Body of pancreas (tissue), 4 donors: ENCODE measurements at regions of chr6 and their contacts with region 1.

Region 1: DNA sequence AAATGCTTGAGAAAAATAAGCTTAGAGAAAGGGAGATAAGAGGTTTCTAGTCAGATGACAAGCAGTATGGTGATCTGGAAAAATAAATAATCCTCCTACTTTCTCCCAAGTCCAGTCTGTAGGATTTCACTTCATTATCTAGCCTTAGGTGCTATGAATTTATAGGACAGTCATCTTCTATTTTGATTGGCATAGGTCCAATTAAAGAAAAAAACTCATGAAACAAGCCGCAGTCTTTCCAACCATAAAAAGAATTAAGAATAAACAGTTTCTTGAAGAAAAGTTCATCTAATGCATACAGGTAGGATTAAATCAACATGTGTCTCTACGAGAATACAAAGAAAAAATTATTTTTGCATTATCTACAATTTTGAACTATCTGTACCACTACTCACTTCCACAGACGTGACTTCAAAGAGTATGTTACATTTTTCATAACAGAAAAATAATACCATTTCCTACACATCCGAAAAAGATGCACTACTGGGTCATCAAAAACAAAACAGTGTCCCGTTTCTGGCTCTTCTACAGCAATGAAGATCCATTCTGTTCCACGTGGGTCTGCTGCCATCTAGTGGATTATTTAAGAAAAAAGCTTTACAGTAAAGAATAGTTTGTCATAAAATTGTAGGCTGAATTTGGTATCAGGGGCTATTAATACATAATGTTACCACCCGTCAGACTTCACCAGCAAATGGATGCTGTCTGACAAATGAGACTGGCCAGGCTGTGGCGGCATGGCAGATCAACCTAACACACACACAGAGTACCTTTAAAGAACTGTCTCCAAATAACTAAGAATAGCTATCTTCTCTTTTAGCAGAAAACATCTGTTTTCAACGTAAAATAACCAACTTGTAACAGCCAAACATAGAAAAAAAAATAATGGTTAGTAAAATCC is 28.9 kb downstream of the STX7 start:
- DNase-seq: peak; percentile 22 to 44 (median 36)
- ATAC-seq: peak; percentile 65
- H3K4me3 ChIP-seq: no peak overlapping the region
- H3K27ac ChIP-seq: no peak overlapping the region
- H3K4me1 ChIP-seq: no peaks in the 10 kb centered on the region
- H3K27me3 ChIP-seq: no peaks in the 10 kb centered on the region
- CTCF ChIP-seq: peak; percentile 26 to 82 (median 68)
- POLR2A ChIP-seq: no peak

Region 2: GRCh38 chr6:132279592-132280139 is 204.4 kb before region 1 on chr6:
- intact Hi-C with region 1: loop called (anchors 10 kb)
- DNase-seq: peak; percentile 69 to 81 (median 75)
- ATAC-seq: peak; percentile 90
- H3K4me3 ChIP-seq: peak overlapping the region in 1 of 2 donors; percentile 37
- H3K27ac ChIP-seq: no peak overlapping the region
- H3K4me1 ChIP-seq: no peaks in the 10 kb centered on the region
- H3K27me3 ChIP-seq: peaks cover 0 to 4% of the 10 kb centered on the region in 2 donors
- CTCF ChIP-seq: peak; percentile 78 to 99 (median 83)
- POLR2A ChIP-seq: no peak

Region 3: DNA sequence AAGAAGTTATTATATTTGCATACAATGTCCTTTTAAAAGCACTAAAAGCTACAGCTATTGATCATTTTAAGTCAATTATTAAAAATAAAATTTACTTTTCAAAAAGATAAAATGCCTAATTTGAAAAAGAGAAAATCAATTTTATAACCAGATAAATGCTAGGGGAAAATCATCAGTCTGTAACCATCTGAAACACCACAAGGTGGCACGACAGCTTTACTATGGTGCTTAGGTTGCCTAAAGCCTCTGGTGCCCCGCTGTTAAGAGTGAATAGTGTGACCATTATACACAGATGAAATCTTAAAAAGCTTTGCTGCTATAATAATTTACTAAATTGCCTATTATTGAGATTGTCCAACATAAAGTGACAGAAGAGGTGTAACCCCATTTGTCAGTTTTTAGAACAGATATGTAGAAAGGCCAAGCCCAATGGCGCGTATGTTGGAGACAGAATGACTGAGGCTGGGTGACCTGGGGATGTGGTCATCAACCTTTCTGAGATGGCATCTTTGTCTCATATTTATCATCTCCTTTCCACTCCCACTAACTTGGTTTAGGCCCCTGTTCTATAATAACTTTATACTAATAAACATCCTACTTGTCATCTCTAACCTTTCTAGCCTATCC is 183.6 kb before region 1 on chr6:
- intact Hi-C with region 1: loop called (anchors 10 kb)
- DNase-seq: peak; percentile 26 to 55 (median 40)
- ATAC-seq: peak; percentile 68
- H3K4me3 ChIP-seq: no peak overlapping the region
- H3K27ac ChIP-seq: no peak overlapping the region
- H3K4me1 ChIP-seq: no peaks in the 10 kb centered on the region
- H3K27me3 ChIP-seq: no peaks in the 10 kb centered on the region
- CTCF ChIP-seq: peak in 6 of 7 experiments; percentile 48 to 64 (median 60)
- POLR2A ChIP-seq: no peak

Region 4: GRCh38 chr6:132623106-132623845 is 139.2 kb after region 1 on chr6:
- intact Hi-C with region 1: no loop called
- DNase-seq: no peak
- ATAC-seq: no peak
- H3K4me3 ChIP-seq: no peak overlapping the region
- H3K27ac ChIP-seq: no peak overlapping the region
- H3K4me1 ChIP-seq: no peaks in the 10 kb centered on the region
- H3K27me3 ChIP-seq: no peaks in the 10 kb centered on the region
- CTCF ChIP-seq: no peak
- POLR2A ChIP-seq: no peak